Mammary epithelial cell (primary cell): ENCODE measurements at regions of chr18 and their contacts with region 1.

Region 1: GRCh38 chr18:47944972-47945843 is 14.7 kb upstream of the SMAD2 start:
- DNase-seq: peak; percentile 95
- H3K4me3 ChIP-seq: no peak overlapping the region
- H3K27ac ChIP-seq: no peak overlapping the region
- H3K4me1 ChIP-seq: peaks cover 12% of the 10 kb centered on the region
- H3K27me3 ChIP-seq: no peaks in the 10 kb centered on the region
- CTCF ChIP-seq: no peak

Region 2: GRCh38 chr18:47881752-47882455 is 63.3 kb before region 1 on chr18:
- CTCF ChIA-PET with region 1: no interaction called
- dilution Hi-C with region 1: no loop called
- in situ Hi-C with region 1: no loop called
- intact Hi-C with region 1: no loop called
- DNase-seq: peak; percentile 56
- H3K4me3 ChIP-seq: no peak overlapping the region
- H3K27ac ChIP-seq: peak overlapping the region; percentile 38
- H3K4me1 ChIP-seq: peaks cover 25% of the 10 kb centered on the region
- H3K27me3 ChIP-seq: no peaks in the 10 kb centered on the region
- CTCF ChIP-seq: no peak

Region 3: DNA sequence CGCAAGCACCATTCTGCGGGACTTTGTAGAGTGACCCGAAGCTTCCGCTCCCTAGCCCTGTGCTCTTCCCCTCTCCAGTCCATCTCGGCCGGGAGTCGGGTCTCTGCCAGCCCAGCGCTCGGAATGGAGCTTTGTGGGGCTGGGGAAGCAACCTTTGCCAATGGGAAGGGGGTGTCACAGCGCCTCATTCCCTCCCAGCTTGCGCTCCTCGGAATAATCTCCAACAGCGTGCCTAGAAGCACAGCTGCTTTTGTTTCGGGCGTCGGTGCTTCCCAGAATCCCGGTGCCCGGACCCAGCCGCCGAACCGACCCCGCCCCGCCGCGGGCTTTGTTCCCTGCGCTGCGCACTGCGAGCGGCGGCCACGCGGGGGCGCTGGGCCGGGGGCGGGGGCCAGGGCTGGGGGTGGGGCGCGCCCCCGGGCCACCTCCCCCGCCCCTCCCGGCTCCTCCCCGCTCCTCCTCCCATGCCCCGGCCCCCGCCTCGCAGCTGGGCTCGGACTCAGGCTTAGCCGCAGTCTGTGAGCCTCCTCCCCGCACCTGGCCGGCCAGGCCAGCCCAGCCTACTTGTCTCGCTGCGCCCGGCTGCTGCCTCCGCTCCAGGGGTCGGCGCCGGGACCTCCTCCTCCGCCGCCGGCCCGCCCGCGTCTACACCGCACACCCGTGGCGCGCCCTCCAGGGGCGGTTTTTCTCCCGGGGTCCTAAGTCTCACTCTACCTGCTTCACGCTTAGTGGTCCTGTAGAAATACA is 62.9 kb after region 1 on chr18:
- CTCF ChIA-PET with region 1: no interaction called
- dilution Hi-C with region 1: no loop called
- in situ Hi-C with region 1: loop called in 1 of 2 experiments (anchors 10 kb)
- intact Hi-C with region 1: no loop called
- DNase-seq: peak; percentile 65
- H3K4me3 ChIP-seq: peak overlapping the region; percentile 58 to 70 (median 60)
- H3K27ac ChIP-seq: no peak overlapping the region
- H3K4me1 ChIP-seq: peaks cover 19% of the 10 kb centered on the region
- H3K27me3 ChIP-seq: no peaks in the 10 kb centered on the region
- CTCF ChIP-seq: peak; percentile 21 to 52